Activated B cell treated with CpG ODN at 0.5 μM for 24 hours (primary cell): ENCODE measurements at regions of chr18 and their contacts with region 1.

Region 1: GRCh38 chr18:31658670-31659575 is 25.5 kb downstream of the B4GALT6 start:
- DNase-seq: no peak
- ATAC-seq: peak; percentile 72
- H3K4me3 Mint-ChIP-seq: peak overlapping the region; percentile 7
- H3K27ac Mint-ChIP-seq: peak overlapping the region; percentile 60
- H3K4me1 Mint-ChIP-seq: peaks cover 28% of the 10 kb centered on the region
- H3K27me3 Mint-ChIP-seq: no peaks in the 10 kb centered on the region
- CTCF ChIP-seq: no peak

Region 2: GRCh38 chr18:31685097-31686082 is 26.5 kb after region 1 on chr18:
- CTCF ChIA-PET with region 1: interaction called, 3 read pairs
- POLR2A ChIA-PET with region 1: interaction called, 3 read pairs
- intact Hi-C with region 1: loop called (anchors 2 kb)
- DNase-seq: peak; percentile 56
- ATAC-seq: peak; percentile 80
- H3K4me3 Mint-ChIP-seq: peak overlapping the region; percentile 82
- H3K27ac Mint-ChIP-seq: peak overlapping the region; percentile 56
- H3K4me1 Mint-ChIP-seq: peaks cover 17% of the 10 kb centered on the region
- H3K27me3 Mint-ChIP-seq: peaks cover 21% of the 10 kb centered on the region
- CTCF ChIP-seq: no peak